Kidney (tissue), 22 donors: ENCODE measurements at regions of chr14 and their contacts with region 1.

Region 1: DNA sequence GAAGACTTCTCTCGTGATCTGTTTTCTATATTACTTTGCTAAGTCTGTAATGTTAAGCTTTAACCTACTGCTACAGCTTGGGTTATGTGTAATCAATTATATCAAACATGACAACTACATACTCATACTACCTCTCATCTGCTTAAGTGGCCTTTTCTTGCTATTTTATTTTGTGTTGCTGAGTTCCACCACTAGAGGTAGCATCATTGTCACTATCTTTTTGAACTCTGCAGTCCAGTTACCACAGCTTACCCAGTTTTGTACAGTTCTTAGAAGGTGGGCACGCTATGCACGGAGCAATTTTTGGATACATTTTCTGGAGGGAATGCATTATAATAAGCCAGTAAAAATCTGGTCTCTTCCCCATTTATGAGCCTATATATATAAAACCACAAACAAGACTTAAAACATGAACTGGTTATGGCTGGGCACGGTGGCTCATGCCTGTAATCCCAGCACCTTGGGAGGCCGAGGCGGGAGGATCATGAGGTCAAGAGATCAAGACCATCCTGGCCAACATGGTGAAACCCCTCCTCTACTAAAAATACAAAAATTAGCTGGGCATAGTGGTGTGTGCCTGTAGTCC is 48.5 kb downstream of the SAV1 start:
- DNase-seq: peak in 2 of 5 donors; percentile 36 to 47
- H3K4me3 ChIP-seq: no peak overlapping the region
- H3K27ac ChIP-seq: no peak overlapping the region
- H3K4me1 ChIP-seq: no peaks in the 10 kb centered on the region
- H3K27me3 ChIP-seq: no peaks in the 10 kb centered on the region
- CTCF ChIP-seq: peak; percentile 67

Region 2: GRCh38 chr14:50773632-50774541 is 154.2 kb after region 1 on chr14:
- intact Hi-C with region 1: loop called (anchors 10 kb)
- DNase-seq: peak in 4 of 5 donors; percentile 46 to 68 (median 60)
- H3K4me3 ChIP-seq: no peak overlapping the region
- H3K27ac ChIP-seq: no peak overlapping the region
- H3K4me1 ChIP-seq: no peaks in the 10 kb centered on the region
- H3K27me3 ChIP-seq: no peaks in the 10 kb centered on the region
- CTCF ChIP-seq: peak; percentile 63